Mammary epithelial cell (primary cell): ENCODE measurements at regions of chr1 and their contacts with region 1.

Region 1: GRCh38 chr1:6080469-6080868 is 34.8 kb downstream of the KCNAB2 start:
- DNase-seq: peak; percentile 12
- H3K4me3 ChIP-seq: no peak overlapping the region
- H3K27ac ChIP-seq: no peak overlapping the region
- H3K4me1 ChIP-seq: no peaks in the 10 kb centered on the region
- H3K27me3 ChIP-seq: no peaks in the 10 kb centered on the region
- CTCF ChIP-seq: peak; percentile 31 to 60

Region 2: DNA sequence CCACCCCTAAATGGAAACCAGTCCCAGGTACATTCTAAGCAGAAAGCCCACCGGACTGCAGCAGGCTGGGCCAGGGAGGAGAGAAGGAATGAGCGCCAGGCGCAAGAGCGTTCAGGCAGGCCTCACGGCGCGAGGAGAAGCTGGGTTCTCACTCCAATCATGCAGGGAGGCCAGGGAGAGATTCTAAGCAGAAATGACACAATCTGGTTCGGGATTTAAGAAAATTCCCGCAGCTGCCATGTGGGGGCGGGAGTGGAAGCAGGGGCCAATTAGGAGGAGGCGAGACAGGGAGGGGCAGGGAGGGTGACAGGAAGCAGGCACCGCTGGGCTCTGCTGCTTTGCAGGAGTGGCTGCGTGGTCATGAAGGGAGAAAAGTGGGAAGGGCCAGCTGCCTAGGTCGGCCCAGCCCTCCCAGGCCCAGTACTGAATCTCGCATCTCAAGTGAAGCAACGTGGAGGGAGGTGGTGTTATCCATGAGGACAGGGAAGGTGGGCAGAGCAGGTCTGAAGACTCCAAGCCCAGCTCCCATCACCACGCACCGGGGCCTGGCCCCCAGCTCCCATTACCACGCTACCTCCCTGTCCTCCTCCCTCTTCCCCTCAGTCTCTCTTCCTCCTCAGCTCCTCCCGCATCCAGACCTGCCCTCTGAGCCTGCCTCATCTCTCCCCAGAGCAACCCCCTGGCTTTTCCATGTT is 100.0 kb before region 1 on chr1:
- CTCF ChIA-PET with region 1: no interaction called
- dilution Hi-C with region 1: no loop called
- in situ Hi-C with region 1: no loop called
- intact Hi-C with region 1: no loop called
- DNase-seq: no peak
- H3K4me3 ChIP-seq: no peak overlapping the region
- H3K27ac ChIP-seq: no peak overlapping the region
- H3K4me1 ChIP-seq: peaks cover 6% of the 10 kb centered on the region
- H3K27me3 ChIP-seq: no peaks in the 10 kb centered on the region
- CTCF ChIP-seq: no peak

Region 3: DNA sequence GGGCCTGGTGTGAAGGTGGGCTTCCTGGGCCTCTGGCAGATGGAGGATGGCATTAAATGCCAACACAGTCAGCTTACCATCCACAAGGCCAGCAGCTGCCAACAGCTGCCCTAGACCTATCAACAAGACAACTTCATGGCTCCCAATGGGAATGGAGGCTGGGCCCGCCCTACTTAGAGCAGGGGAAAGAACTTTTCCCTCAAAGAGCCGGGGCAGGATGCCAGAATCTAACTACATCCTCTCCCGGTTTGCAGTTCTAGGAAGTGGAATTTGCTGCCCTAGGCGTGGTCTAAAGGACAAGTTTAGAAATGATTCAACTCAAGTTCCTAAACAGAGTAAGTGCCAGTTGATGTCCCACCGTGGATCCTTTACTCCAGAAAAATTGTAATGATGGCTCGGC is 142.2 kb after region 1 on chr1:
- CTCF ChIA-PET with region 1: no interaction called
- dilution Hi-C with region 1: loop called (anchors 10 kb)
- in situ Hi-C with region 1: no loop called
- intact Hi-C with region 1: no loop called
- DNase-seq: no peak
- H3K4me3 ChIP-seq: no peak overlapping the region
- H3K27ac ChIP-seq: no peak overlapping the region
- H3K4me1 ChIP-seq: peaks cover 14% of the 10 kb centered on the region
- H3K27me3 ChIP-seq: no peaks in the 10 kb centered on the region
- CTCF ChIP-seq: no peak